ENCODE measurements at regions of chr14 and their contacts with region 1.

Region 1: GRCh38 chr14:88492272-88493089 is 62.3 kb downstream of the PTPN21 start:
- DNase-seq: peak; percentile 65
- ATAC-seq: peak; percentile 95
- H3K4me3 ChIP-seq: no peak overlapping the region
- H3K27ac ChIP-seq: no peak overlapping the region
- H3K4me1 ChIP-seq: no peaks in the 10 kb centered on the region
- H3K27me3 ChIP-seq: no peaks in the 10 kb centered on the region
- CTCF ChIP-seq: peak; percentile 80
- EP300 ChIP-seq: no peak
- POLR2A ChIP-seq: no peak
- RAD21 ChIP-seq: peak; percentile 72

Region 2: GRCh38 chr14:88106377-88106776 is 386.1 kb before region 1 on chr14:
- CTCF ChIA-PET with region 1: no interaction called
- POLR2A ChIA-PET with region 1: no interaction called
- in situ Hi-C with region 1: no loop called
- intact Hi-C with region 1: no loop called
- DNase-seq: no peak
- ATAC-seq: peak; percentile 52
- H3K4me3 ChIP-seq: no peak overlapping the region
- H3K27ac ChIP-seq: no peak overlapping the region
- H3K4me1 ChIP-seq: no peaks in the 10 kb centered on the region
- H3K27me3 ChIP-seq: no peaks in the 10 kb centered on the region
- CTCF ChIP-seq: no peak
- EP300 ChIP-seq: no peak
- POLR2A ChIP-seq: no peak
- RAD21 ChIP-seq: no peak

Region 3: DNA sequence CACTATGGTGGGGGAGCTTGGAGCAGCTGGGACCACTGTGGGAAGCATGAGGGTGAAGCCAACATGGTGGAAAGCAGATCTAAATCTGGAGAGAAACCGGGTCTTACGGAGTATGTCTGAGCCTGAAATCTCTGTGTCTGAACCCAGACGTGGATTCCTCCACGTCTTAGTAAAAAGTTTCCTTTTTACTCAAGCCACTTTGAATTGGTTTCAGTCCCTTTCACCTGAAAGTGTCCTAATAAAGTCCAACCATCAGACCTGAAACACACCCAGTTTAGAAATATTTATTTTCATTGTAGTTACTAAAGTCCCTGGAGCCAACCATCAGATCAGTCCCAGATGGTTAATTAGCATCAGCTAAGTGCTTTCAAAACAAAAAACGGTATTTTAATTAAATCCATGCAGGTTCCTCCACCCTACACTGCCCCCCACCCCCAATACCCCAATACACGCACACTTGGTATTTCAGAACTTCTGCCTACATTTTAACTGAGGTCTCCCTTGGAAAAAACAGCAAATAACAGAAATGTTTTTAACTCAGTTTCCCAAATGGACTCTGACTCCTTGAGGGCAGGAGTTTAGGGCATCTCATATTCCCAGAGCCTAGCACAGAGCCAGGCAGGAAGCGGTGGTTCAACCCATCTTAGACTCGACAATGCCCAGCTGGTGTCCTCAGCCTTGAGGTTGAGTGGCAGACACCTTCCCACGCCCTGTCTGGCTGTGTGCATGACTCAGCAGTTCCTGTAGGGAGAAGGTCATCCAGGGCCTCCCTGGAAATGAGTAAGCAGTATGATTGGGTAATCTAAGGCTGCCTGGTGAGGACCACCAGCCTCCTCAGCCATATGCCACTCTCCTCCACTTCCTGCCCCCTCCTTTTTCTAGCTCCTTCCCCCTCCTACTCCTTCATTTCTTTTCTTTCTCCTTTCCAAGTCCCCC is 507.8 kb after region 1 on chr14:
- CTCF ChIA-PET with region 1: no interaction called
- POLR2A ChIA-PET with region 1: no interaction called
- in situ Hi-C with region 1: loop called (anchors 25 kb)
- intact Hi-C with region 1: no loop called
- DNase-seq: peak; percentile 29
- ATAC-seq: peak; percentile 36
- H3K4me3 ChIP-seq: no peak overlapping the region
- H3K27ac ChIP-seq: no peak overlapping the region
- H3K4me1 ChIP-seq: no peaks in the 10 kb centered on the region
- H3K27me3 ChIP-seq: peaks cover 0 to 2% of the 10 kb centered on the region in 2 experiments; a peak in 1 of 5 replicates
- CTCF ChIP-seq: no peak
- EP300 ChIP-seq: no peak
- POLR2A ChIP-seq: no peak
- RAD21 ChIP-seq: no peak

Measured in HepG2 (cell line).